ENCODE measurements at regions of chrX and their contacts with region 1.

Region 1: DNA sequence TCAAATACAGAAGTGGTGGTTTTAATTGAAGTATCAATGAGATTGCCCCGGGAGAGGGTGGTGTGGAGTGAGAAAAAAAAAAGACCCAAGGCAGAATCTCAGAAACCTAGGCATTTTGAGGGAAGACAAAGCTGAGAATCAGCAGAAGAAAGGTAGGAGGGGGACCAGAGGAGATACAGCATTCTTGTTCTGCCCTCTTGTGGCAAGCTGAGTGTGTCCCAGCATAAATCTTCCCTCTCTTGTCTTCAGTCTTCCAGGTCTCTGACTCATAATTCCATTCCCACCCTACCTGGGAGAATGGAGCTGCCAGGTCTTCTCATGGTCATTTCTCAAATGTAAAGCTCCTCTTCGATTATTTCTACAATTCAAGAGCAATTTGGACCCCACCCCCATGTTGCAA is 32.7 kb upstream of the MAGED1 start:
- H3K4me3 Mint-ChIP-seq: no peak overlapping the region
- H3K27ac Mint-ChIP-seq: no peak overlapping the region
- H3K4me1 Mint-ChIP-seq: no peaks in the 10 kb centered on the region
- H3K27me3 Mint-ChIP-seq: no peaks in the 10 kb centered on the region

Region 2: DNA sequence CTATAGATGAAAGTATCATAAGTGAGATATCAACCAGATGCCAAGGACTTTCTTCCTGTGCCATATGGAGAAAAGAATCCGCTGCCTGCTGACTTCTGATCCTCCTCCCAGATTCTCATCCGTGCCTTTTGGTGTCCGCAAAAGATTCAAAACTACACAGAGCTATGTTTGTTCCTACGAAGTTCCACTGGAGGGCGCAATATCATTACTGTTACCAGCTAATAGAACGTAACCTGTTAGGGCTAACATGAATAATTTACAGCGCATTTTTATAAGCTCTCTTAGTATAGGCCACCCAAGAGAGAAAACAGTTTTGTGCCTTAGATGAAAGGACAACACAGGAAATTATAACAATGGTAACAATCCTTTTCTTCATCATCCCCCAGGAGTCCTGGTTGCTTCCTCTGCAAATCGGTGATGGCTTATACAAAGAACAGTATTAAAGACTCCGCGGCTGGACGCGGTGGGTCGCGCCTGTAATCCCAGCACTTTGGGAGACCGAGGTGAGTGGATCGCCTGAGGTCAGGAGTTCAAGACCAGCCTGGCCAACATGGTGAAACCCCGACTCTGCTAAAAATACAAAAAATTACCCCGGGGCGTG is 219.2 kb before region 1 on chrX:
- intact Hi-C with region 1: loop called (anchors 2 kb)
- H3K4me3 Mint-ChIP-seq: no peak overlapping the region
- H3K27ac Mint-ChIP-seq: no peak overlapping the region
- H3K4me1 Mint-ChIP-seq: no peaks in the 10 kb centered on the region
- H3K27me3 Mint-ChIP-seq: peaks cover 7% of the 10 kb centered on the region

Region 3: GRCh38 chrX:51798698-51799097 is 62.0 kb before region 1 on chrX:
- intact Hi-C with region 1: no loop called
- H3K4me3 Mint-ChIP-seq: no peak overlapping the region
- H3K27ac Mint-ChIP-seq: no peak overlapping the region
- H3K4me1 Mint-ChIP-seq: peaks cover 7% of the 10 kb centered on the region
- H3K27me3 Mint-ChIP-seq: peaks cover 7% of the 10 kb centered on the region

Region 4: DNA sequence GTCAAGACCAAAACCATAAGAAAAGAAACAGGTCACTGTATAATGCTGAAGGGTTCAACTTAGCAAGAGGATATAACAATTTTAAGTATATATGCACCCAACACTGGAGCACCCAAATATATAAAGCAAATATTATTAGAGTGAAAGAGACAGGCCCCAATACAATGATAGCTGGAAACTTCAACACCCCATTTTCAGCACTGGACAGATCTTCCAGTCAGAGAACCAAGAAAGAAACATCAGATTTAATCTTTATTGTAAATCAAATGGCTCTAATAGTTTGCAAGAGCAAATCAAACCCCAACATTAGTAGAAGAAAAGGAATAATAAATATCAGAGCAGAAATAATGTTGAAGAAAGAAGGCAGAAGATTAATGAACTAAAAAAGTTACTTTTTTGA is 360.3 kb after region 1 on chrX:
- intact Hi-C with region 1: no loop called
- H3K4me3 Mint-ChIP-seq: no peak overlapping the region
- H3K27ac Mint-ChIP-seq: no peak overlapping the region
- H3K4me1 Mint-ChIP-seq: no peaks in the 10 kb centered on the region
- H3K27me3 Mint-ChIP-seq: no peaks in the 10 kb centered on the region

Measured in dendritic cell treated with granulocyte-macrophage colony-stimulating factor and Interleukin-4, amounts not matched to agents 40 ng/mL and 50 ng/mL, for 4 days (primary cell).